ENCODE measurements at regions of chr13 and their contacts with region 1.

Region 1: DNA sequence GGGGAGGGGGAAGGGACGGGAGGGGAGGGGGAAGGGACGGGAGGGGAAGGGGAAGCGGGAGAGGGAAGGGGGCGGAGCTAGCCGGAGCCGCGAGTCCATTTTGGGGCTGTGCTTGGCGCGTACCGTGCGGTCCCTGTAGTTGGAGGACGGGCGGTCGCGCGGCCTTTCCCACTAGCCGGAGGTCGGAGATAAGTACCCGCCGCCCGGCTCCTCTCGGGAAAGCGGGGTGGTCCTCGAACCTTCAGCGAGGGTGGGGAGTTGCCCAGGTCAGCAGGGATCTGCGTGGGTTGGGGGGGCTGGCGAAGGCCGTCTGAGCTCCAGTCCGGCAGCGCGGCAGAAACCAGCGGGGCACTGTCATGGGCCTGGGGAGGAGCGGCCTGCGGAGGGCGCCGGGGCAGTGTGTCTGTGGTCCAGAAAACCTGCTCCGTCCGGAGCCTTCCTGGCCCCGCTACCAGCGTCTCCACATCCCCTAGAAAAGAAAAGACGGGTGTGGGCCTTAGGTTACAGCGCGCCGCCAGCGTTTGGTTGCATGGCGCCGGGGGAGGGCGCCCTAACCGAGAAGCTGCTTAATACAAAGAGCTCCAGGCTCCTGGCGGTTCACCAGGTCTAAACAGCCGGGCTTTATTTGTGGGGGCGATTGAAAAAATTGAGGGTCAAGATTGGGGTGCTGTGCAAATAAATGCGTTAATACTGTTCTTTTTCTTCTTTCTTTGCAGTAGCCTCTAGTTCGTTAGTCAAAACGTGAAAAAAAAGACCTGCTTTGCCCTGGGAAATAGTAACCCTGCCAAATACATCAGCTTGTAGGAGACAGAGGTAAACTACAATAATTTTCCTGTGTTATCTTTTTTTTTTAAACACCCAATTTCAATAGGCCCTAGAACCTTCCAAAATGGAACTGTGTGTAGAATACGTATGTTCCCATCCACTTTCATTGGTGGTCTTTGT is at the start of gene TRIM13:
- H3K4me3 Mint-ChIP-seq: peak within 1 kb of the TSS; percentile 83
- H3K27ac Mint-ChIP-seq: peak within 1 kb of the TSS; percentile 97
- H3K4me1 Mint-ChIP-seq: peaks cover 36% of the 10 kb centered on the region
- H3K27me3 Mint-ChIP-seq: no peaks in the 10 kb centered on the region

Region 2: GRCh38 chr13:49792550-49793324 is 204.5 kb before region 1 on chr13 and contains the start of gene KPNA3:
- intact Hi-C with region 1: loop called (anchors 5 kb)
- H3K4me3 Mint-ChIP-seq: peak within 1 kb of the TSS; percentile 87
- H3K27ac Mint-ChIP-seq: peak within 1 kb of the TSS; percentile 93
- H3K4me1 Mint-ChIP-seq: peaks cover 27% of the 10 kb centered on the region
- H3K27me3 Mint-ChIP-seq: no peaks in the 10 kb centered on the region

Region 3: DNA sequence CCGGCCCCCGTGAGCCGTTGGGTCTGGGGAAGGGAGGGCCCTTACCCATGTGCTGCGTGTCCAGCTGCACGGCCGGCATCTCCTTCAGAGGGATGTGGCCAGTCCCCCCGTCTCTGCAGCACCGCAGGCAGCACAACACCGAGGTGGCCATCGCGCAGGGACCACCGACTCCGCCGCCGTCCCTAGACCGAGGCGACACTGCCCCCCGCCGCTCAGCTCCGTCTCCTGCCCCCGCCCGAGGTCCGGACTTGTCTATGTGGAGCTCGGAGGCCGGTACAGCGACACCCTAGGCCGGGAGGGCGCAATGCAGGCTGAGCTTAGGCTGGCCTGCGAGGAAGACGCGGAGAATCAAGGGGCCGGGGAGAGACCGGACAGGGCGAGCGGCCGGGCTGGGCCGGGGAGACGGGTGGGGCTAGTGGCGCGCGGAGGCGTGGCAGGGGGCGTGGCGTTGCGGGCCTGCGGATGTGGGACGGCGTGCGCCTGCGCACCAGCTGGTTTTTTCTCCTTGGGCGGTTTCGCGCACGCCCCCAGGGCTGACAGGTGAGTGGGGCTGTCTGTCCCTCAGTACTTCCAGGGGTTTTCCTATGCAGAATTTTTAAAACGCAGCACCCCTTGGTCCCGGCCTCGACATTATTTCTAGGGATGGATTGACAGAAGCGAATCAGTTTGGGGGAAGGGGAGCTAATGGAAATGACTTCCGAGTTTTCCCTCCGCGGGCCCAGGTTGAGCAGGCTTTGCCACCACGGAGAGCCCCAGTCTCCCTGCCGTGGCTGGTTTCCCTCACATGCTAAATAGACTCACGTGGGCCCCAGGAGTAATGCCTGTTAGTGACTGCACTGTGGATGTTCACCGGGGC is 60.9 kb before region 1 on chr13 and contains the start of gene SPRYD7:
- intact Hi-C with region 1: loop called (anchors 1 kb)
- H3K4me3 Mint-ChIP-seq: peak within 1 kb of the TSS; percentile 78
- H3K27ac Mint-ChIP-seq: peak within 1 kb of the TSS; percentile 79
- H3K4me1 Mint-ChIP-seq: peaks cover 22% of the 10 kb centered on the region
- H3K27me3 Mint-ChIP-seq: no peaks in the 10 kb centered on the region

Region 4: GRCh38 chr13:49951754-49952535 is 45.3 kb before region 1 on chr13:
- intact Hi-C with region 1: no loop called
- H3K4me3 Mint-ChIP-seq: no peak overlapping the region
- H3K27ac Mint-ChIP-seq: no peak overlapping the region
- H3K4me1 Mint-ChIP-seq: peaks cover 15% of the 10 kb centered on the region
- H3K27me3 Mint-ChIP-seq: no peaks in the 10 kb centered on the region

Region 5: GRCh38 chr13:50081679-50082425 is 84.6 kb after region 1 on chr13:
- intact Hi-C with region 1: loop called (anchors 2 kb)
- H3K4me3 Mint-ChIP-seq: peak overlapping the region; percentile 98
- H3K27ac Mint-ChIP-seq: peak overlapping the region; percentile 91
- H3K4me1 Mint-ChIP-seq: peaks cover 52% of the 10 kb centered on the region
- H3K27me3 Mint-ChIP-seq: no peaks in the 10 kb centered on the region

Region 6: GRCh38 chr13:50123862-50124536 is 126.8 kb after region 1 on chr13:
- intact Hi-C with region 1: loop called (anchors 2 kb)
- H3K4me3 Mint-ChIP-seq: peak overlapping the region; percentile 90
- H3K27ac Mint-ChIP-seq: peak overlapping the region; percentile 85
- H3K4me1 Mint-ChIP-seq: peaks cover 66% of the 10 kb centered on the region
- H3K27me3 Mint-ChIP-seq: peaks cover 11% of the 10 kb centered on the region